ENCODE measurements at regions of chr4 and their contacts with region 1.

Region 1: GRCh38 chr4:99949034-99949998 is 759 bp downstream of the H2AZ1 start:
- DNase-seq: peak; percentile 87 to 94 (median 88)
- H3K4me3 ChIP-seq: peak overlapping the region; percentile 90 to 98
- H3K4me3 Mint-ChIP-seq: no peak overlapping the region
- H3K27ac ChIP-seq: peak overlapping the region; percentile 86
- H3K27ac Mint-ChIP-seq: no peak overlapping the region
- H3K4me1 ChIP-seq: peaks cover 53% of the 10 kb centered on the region
- H3K4me1 Mint-ChIP-seq: peaks cover 24 to 33% (median 32%) of the 10 kb centered on the region in 4 donors
- H3K27me3 ChIP-seq: no peaks in the 10 kb centered on the region
- H3K27me3 Mint-ChIP-seq: no peaks in the 10 kb centered on the region

Region 2: GRCh38 chr4:98143001-98143899 is 1806.1 kb before region 1 on chr4 and contains the start of gene STPG2:
- CTCF ChIA-PET with region 1: no interaction called
- POLR2A ChIA-PET with region 1: interaction called, 3 read pairs
- intact Hi-C with region 1: loop called (anchors 5 kb)
- DNase-seq: peak; percentile 91 to 92 (median 92)
- H3K4me3 ChIP-seq: peak within 1 kb of the TSS; percentile 67 to 69
- H3K4me3 Mint-ChIP-seq: peak within 1 kb of the TSS; percentile 88 to 96 (median 93)
- H3K27ac ChIP-seq: peak within 1 kb of the TSS; percentile 74
- H3K27ac Mint-ChIP-seq: peak within 1 kb of the TSS; percentile 97 to 98 (median 97)
- H3K4me1 ChIP-seq: peaks cover 23% of the 10 kb centered on the region
- H3K4me1 Mint-ChIP-seq: peaks cover 16 to 35% (median 23%) of the 10 kb centered on the region in 4 donors
- H3K27me3 ChIP-seq: no peaks in the 10 kb centered on the region
- H3K27me3 Mint-ChIP-seq: no peaks in the 10 kb centered on the region
- total RNA-seq, gene STPG2: 0.47 to 0.84 TPM

Region 3: GRCh38 chr4:99088481-99089365 is 860.6 kb before region 1 on chr4 and contains the start of gene ADH5:
- CTCF ChIA-PET with region 1: no interaction called
- POLR2A ChIA-PET with region 1: interaction called, 17 read pairs
- intact Hi-C with region 1: loop called (anchors 1 kb)
- DNase-seq: peak; percentile 83 to 90 (median 86)
- H3K4me3 ChIP-seq: peak within 1 kb of the TSS; percentile 73 to 99
- H3K4me3 Mint-ChIP-seq: peak within 1 kb of the TSS; percentile 92 to 99 (median 98)
- H3K27ac ChIP-seq: peak within 1 kb of the TSS; percentile 77
- H3K27ac Mint-ChIP-seq: peak within 1 kb of the TSS; percentile 89 to 99 (median 98)
- H3K4me1 ChIP-seq: peaks cover 39% of the 10 kb centered on the region
- H3K4me1 Mint-ChIP-seq: peaks cover 35 to 71% (median 54%) of the 10 kb centered on the region in 4 donors
- H3K27me3 ChIP-seq: no peaks in the 10 kb centered on the region
- H3K27me3 Mint-ChIP-seq: no peaks in the 10 kb centered on the region
- total RNA-seq, gene ADH5: 75.6 to 80.5 TPM

Region 4: DNA sequence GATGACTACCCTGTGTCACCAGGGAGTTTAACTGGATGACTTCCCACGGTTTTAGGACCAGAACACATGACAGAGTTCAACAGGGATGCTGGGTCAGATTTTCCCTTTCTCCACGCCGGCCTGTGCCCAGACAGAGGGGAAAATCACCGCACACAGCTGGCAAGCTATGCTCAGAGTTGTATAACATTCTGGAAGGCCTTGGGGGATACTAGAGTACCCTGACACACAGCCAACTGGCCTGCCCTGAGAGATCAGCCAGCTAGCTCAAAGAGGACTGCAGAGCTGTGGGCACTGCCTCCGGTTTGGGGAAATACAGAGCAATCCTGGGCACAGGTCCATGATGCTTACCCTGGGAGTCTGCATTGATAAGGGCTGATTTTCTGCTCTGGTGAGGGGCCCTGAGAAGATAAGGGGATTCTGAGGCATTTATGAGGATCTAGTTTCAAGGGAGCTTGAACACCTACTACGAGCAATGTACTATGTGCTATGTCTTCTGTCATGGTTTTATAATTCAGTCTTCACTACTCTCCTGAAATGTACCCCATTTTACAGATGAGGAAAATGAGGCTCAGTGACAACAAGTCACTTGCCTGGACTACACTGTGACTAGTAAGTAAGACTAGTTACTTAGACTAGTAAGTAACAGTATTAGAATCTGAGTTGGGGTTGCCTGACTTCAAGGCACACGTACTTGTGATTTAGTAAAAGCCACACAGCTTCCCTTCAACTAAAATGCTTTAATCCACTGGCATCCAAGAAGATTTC is 306.4 kb before region 1 on chr4:
- CTCF ChIA-PET with region 1: no interaction called
- POLR2A ChIA-PET with region 1: no interaction called
- intact Hi-C with region 1: no loop called
- DNase-seq: no peak
- H3K4me3 ChIP-seq: no peak overlapping the region
- H3K4me3 Mint-ChIP-seq: no peak overlapping the region
- H3K27ac ChIP-seq: no peak overlapping the region
- H3K27ac Mint-ChIP-seq: no peak overlapping the region
- H3K4me1 ChIP-seq: no peaks in the 10 kb centered on the region
- H3K4me1 Mint-ChIP-seq: no peaks in the 10 kb centered on the region
- H3K27me3 ChIP-seq: no peaks in the 10 kb centered on the region
- H3K27me3 Mint-ChIP-seq: peaks cover 0 to 4% of the 10 kb centered on the region in 2 donors

Region 5: DNA sequence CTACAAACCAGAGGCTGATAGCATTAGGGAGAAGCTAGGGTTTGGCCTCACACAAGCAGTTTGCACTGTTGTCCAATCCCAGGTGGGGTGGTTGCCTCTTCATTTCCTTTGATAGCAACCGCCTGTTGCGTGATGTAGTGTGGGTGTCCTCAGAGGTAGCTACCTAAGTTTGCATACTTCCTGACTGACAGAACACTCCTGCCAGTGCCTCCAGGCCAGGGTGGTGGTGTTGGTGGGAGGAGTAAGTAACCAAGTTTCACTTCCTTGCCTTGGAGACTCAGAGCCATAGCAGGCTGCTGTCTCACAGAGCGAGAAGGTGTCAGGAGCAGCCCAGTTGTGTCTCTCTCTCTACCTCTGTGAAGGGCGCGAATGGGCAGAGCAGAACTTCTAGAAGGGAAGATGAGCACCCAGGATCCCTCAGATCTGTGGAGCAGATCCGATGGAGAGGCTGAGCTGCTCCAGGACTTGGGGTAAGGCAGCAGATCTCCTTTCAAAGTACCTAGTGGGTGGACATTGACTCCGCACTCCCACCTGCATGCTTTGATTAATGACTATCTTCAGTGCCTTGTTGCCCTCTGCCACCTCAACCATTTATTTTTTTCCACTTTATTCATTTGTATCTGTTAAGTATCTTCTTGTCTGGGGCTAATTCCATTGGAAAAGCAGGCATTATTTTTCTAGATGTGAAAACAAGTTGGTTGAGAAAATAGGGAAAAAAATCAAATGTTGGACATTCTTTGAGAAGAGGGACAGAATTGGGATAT is 132.6 kb before region 1 on chr4 and contains the start of gene DAPP1:
- CTCF ChIA-PET with region 1: interaction called, 50 read pairs
- POLR2A ChIA-PET with region 1: interaction called, 69 read pairs
- intact Hi-C with region 1: loop called (anchors 1 kb)
- DNase-seq: peak; percentile 82 to 93 (median 87)
- H3K4me3 ChIP-seq: peak within 1 kb of the TSS; percentile 55 to 92
- H3K4me3 Mint-ChIP-seq: peak within 1 kb of the TSS; percentile 89 to 95 (median 91)
- H3K27ac ChIP-seq: peak within 1 kb of the TSS; percentile 69
- H3K27ac Mint-ChIP-seq: peak within 1 kb of the TSS; percentile 91 to 98 (median 97)
- H3K4me1 ChIP-seq: peaks cover 63% of the 10 kb centered on the region
- H3K4me1 Mint-ChIP-seq: peaks cover 44 to 61% (median 54%) of the 10 kb centered on the region in 4 donors
- H3K27me3 ChIP-seq: no peaks in the 10 kb centered on the region
- H3K27me3 Mint-ChIP-seq: no peaks in the 10 kb centered on the region
- total RNA-seq, gene DAPP1: 21.3 to 23.0 TPM

Region 6: GRCh38 chr4:99894161-99894997 is 54.9 kb before region 1 on chr4 and contains the start of gene LAMTOR3:
- CTCF ChIA-PET with region 1: interaction called, 16 read pairs
- POLR2A ChIA-PET with region 1: interaction called, 118 read pairs
- intact Hi-C with region 1: loop called (anchors 1 kb)
- DNase-seq: peak; percentile 88 to 94 (median 92)
- H3K4me3 ChIP-seq: peak within 1 kb of the TSS; percentile 76 to 97
- H3K4me3 Mint-ChIP-seq: peak within 1 kb of the TSS; percentile 97 to 100 (median 98)
- H3K27ac ChIP-seq: peak within 1 kb of the TSS; percentile 87
- H3K27ac Mint-ChIP-seq: peak within 1 kb of the TSS; percentile 97 to 99 (median 99)
- H3K4me1 ChIP-seq: peaks cover 34% of the 10 kb centered on the region
- H3K4me1 Mint-ChIP-seq: peaks cover 27 to 47% (median 38%) of the 10 kb centered on the region in 4 donors
- H3K27me3 ChIP-seq: no peaks in the 10 kb centered on the region
- H3K27me3 Mint-ChIP-seq: no peaks in the 10 kb centered on the region
- total RNA-seq, gene LAMTOR3: 24.2 to 27.0 TPM

Region 7: DNA sequence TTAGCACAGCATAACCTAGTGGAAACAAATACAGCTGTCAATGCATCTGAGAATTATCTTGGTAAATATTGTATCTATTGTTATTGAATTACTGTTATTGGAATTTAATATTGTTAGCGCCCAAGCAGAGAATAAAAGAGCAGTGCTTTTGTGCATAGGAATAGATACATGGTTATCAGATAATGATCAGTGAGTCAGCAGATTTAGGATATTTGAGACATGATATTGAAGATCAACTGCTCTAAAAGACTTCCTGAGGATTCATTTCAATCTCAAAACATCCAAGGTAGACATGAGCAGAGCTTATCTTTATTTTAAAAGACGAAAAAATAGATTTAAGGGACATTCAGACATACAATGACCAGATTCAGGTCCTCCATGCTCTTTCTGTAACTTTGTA is 11.3 kb after region 1 on chr4:
- CTCF ChIA-PET with region 1: interaction called, 10 read pairs
- POLR2A ChIA-PET with region 1: interaction called, 21 read pairs
- intact Hi-C with region 1: no loop called
- DNase-seq: no peak
- H3K4me3 ChIP-seq: no peak overlapping the region
- H3K4me3 Mint-ChIP-seq: no peak overlapping the region
- H3K27ac ChIP-seq: no peak overlapping the region
- H3K27ac Mint-ChIP-seq: no peak overlapping the region
- H3K4me1 ChIP-seq: peaks cover 8% of the 10 kb centered on the region
- H3K4me1 Mint-ChIP-seq: peaks cover 4 to 11% (median 11%) of the 10 kb centered on the region in 4 donors
- H3K27me3 ChIP-seq: no peaks in the 10 kb centered on the region
- H3K27me3 Mint-ChIP-seq: no peaks in the 10 kb centered on the region